ENCODE measurements at regions of chr17 and their contacts with region 1.

Region 1: GRCh38 chr17:40038882-40039513 is 15.2 kb downstream of the MED24 start:
- H3K4me3 ChIP-seq: no peak overlapping the region
- H3K27ac ChIP-seq: no peak overlapping the region
- H3K4me1 ChIP-seq: no peaks in the 10 kb centered on the region
- CTCF ChIP-seq: no peak

Region 2: GRCh38 chr17:40015005-40015997 is 23.7 kb before region 1 on chr17 and contains the start of gene CSF3:
- CTCF ChIA-PET with region 1: interaction called, 83 read pairs
- POLR2A ChIA-PET with region 1: interaction called, 8 read pairs
- H3K4me3 ChIP-seq: no peak within 1 kb of the TSS
- H3K27ac ChIP-seq: no peak within 1 kb of the TSS
- H3K4me1 ChIP-seq: no peaks in the 10 kb centered on the region
- CTCF ChIP-seq: no peak

Region 3: DNA sequence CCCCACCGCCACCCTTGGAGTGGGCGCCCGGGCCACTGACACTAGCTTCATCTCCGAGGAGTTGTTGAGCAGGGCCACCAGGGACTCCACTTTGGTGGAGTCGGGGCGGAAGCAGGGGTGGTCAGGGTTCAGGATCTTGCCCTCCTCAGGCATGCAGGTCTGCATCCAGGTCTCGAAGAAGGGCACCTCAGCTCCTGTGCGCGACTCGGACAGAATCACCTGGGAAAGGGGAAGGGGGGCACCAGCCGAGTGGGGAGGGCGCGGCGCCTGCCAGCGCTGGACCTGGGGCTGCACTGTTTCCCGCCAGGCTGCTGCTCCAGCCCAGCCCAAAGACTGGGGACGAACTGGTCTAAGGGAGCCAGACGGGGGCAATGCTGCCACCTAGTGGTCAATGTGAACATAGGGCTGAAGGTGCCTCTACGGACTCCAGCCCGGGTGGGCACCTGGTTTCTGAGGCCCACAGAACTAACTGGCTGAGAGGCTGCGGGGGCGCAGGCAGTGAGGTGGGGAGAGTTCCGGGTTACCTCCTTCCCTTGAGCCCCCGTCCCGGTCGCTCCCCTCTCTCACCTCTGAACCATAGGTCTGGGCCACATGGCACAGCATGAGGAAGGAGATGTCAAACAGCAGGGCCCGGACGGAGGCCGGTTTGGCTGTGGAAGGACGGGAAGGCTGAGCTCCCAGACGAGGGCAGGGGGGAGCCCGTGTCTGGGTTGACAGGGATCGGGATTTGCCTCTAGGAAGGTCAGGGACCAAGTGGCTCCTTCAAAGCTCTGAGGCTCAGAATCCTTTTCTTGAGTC is 12.0 kb before region 1 on chr17:
- CTCF ChIA-PET with region 1: interaction called, 127 read pairs
- POLR2A ChIA-PET with region 1: interaction called, 6 read pairs
- H3K4me3 ChIP-seq: no peak overlapping the region
- H3K27ac ChIP-seq: no peak overlapping the region
- H3K4me1 ChIP-seq: peaks cover 16% of the 10 kb centered on the region
- CTCF ChIP-seq: peak; percentile 82

Region 4: DNA sequence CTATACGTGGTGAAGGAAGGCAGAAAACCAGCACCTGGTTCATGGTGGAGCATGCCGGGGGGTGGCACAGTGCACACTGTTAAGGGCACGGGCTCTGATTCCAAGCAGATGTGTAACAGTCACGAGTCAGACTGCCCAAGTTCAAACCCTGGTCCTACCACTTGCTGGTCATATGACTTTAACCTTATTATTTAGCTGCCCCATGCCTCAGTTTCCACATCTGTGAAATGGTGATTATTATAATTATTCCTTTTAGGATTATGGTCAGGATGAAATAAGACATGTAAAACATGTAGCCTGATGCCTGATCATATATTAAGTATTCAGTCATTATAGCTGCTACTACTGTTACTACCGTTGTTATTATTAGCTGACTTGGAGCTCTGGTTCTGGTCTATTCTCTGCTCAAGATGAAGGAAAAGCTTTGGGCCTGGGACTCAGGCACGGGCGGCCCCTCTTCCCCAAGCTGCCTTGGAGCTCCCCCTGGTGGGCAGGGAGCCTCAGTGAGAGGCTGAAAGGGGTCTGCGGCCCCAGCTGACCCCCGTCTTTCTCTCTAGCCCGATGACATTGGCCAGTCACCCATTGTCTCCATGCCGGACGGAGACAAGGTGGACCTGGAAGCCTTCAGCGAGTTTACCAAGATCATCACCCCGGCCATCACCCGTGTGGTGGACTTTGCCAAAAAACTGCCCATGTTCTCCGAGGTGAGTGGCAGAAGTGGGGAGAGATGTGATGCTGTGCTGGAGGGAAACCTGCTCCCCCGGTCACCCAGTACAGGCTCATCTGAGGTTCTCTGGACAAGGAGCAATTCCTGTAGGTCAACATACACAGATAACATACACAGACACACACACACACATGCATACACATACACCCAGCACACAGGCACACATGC is 47.4 kb after region 1 on chr17:
- CTCF ChIA-PET with region 1: interaction called, 154 read pairs
- POLR2A ChIA-PET with region 1: interaction called, 3 read pairs
- H3K4me3 ChIP-seq: no peak overlapping the region
- H3K27ac ChIP-seq: no peak overlapping the region
- H3K4me1 ChIP-seq: no peaks in the 10 kb centered on the region
- CTCF ChIP-seq: peak; percentile 65; the same call in 1 of the 2 replicates

Region 5: DNA sequence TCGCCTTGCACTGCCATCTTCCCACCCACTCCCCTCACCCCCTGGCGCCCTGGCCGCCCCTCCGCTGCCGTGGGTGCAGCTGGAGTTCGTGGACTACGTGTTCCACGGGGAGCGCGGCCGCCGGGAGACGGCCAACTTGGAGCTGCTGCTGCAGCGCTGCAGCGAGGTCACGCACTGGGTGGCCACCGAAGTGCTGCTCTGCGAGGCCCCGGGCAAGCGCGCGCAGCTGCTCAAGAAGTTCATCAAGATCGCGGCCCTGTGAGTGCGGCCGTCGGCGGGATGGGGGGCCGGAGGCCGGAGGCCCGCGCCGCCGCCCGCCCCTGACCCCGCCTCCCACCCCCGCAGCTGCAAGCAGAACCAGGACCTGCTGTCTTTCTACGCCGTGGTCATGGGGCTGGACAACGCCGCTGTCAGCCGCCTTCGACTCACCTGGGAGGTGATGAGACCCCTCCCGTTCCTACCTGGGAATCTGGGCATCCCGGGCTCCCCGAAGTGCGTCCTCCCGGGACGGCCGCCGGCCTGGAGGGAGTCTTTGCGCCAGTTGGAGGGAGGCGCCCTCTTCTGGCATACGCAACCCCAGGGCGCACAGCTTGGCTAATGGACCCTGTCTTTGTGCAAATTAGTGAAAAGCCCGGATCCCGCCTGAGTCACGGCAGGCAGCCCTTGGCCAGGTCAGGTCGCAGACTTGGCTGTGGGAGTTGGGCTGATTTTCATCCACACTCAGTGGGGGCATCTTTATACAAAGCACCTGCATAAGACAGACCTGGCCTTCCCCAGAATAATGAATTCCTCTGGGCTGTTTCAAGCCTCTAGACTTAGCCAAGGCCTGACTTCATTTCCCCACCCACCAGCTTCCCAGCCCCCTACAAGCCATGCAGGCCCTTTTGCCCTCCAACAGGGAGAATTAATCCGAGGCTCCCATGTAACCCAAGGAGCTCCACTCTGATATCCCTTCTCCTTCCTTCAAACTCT is 152.5 kb after region 1 on chr17:
- CTCF ChIA-PET with region 1: interaction called, 13 read pairs
- POLR2A ChIA-PET with region 1: no interaction called
- H3K4me3 ChIP-seq: peak overlapping the region; percentile 50
- H3K27ac ChIP-seq: no peak overlapping the region
- H3K4me1 ChIP-seq: peaks cover 6% of the 10 kb centered on the region
- CTCF ChIP-seq: peak; percentile 90

Measured in HEK293 (cell line).